GM23248 (cell line): ENCODE measurements at regions of chr2 and their contacts with region 1.

Region 1: DNA sequence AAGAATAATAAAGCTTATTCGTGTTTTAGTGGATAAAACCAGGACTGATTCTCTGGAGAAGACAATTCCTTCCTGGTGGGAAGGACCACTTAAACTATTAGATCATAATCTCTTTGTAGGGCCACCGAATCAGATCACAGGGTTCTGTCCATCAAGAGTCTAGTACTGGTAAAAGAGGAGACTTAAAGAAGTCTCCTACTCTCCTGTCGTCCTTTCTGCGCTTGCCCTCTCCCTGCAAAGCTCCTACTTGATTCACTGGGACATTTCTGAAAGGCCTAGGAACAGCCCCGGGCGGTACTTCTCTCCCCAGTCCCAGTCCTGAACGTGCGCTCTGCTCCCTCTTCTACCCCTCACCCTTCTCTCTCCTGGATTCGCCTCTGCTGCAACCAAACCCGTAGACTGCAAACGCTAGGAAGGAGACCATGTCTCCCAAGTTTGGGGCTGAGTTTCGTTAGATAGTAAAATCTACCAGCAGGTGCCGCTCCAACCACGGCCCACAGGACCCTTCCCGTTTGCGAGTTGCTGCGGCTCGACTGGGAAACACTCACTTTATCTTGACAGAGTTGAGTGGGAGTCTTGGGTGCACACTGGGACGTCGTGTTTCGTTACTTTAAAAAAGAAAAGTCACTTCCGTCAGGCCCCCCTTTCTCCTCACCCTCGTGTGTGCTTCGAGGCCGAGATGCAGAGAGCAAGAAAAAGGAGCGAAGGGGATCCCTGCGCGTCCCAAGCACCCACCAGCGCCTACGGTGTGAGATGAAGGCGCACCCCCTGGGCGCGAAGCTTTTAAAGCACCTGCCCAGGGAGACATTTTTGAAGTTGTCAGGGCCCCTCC is 923 bp downstream of the FIGLA start:
- DNase-seq: peak; percentile 68
- H3K4me3 ChIP-seq: peak overlapping the region; percentile 18; the same call in 1 of the 2 replicates
- H3K27ac ChIP-seq: no peak overlapping the region
- H3K4me1 ChIP-seq: no peaks in the 10 kb centered on the region
- H3K27me3 ChIP-seq: peaks cover 69% of the 10 kb centered on the region

Region 2: GRCh38 chr2:70301344-70302194 is 488.0 kb before region 1 on chr2 and contains the start of gene FAM136A:
- in situ Hi-C with region 1: loop called (anchors 25 kb)
- DNase-seq: peak; percentile 91
- H3K4me3 ChIP-seq: peak within 1 kb of the TSS; percentile 97
- H3K27ac ChIP-seq: peak within 1 kb of the TSS; percentile 15; the same call in 1 of the 2 replicates
- H3K4me1 ChIP-seq: peaks cover 4% of the 10 kb centered on the region; the same call in 1 of the 2 replicates
- H3K27me3 ChIP-seq: no peaks in the 10 kb centered on the region
- total RNA-seq, gene FAM136A: 40.3 and 44.2 TPM in 2 replicates

Region 3: GRCh38 chr2:70541481-70542020 is 248.0 kb before region 1 on chr2:
- in situ Hi-C with region 1: no loop called
- DNase-seq: peak; percentile 74
- H3K4me3 ChIP-seq: no peak overlapping the region
- H3K27ac ChIP-seq: no peak overlapping the region
- H3K4me1 ChIP-seq: peaks cover 17% of the 10 kb centered on the region
- H3K27me3 ChIP-seq: no peaks in the 10 kb centered on the region

Region 4: GRCh38 chr2:70656421-70657010 is 133.0 kb before region 1 on chr2:
- in situ Hi-C with region 1: loop called (anchors 10 kb)
- DNase-seq: no peak
- H3K4me3 ChIP-seq: no peak overlapping the region
- H3K27ac ChIP-seq: no peak overlapping the region
- H3K4me1 ChIP-seq: no peaks in the 10 kb centered on the region
- H3K27me3 ChIP-seq: peaks cover 65% of the 10 kb centered on the region

Region 5: DNA sequence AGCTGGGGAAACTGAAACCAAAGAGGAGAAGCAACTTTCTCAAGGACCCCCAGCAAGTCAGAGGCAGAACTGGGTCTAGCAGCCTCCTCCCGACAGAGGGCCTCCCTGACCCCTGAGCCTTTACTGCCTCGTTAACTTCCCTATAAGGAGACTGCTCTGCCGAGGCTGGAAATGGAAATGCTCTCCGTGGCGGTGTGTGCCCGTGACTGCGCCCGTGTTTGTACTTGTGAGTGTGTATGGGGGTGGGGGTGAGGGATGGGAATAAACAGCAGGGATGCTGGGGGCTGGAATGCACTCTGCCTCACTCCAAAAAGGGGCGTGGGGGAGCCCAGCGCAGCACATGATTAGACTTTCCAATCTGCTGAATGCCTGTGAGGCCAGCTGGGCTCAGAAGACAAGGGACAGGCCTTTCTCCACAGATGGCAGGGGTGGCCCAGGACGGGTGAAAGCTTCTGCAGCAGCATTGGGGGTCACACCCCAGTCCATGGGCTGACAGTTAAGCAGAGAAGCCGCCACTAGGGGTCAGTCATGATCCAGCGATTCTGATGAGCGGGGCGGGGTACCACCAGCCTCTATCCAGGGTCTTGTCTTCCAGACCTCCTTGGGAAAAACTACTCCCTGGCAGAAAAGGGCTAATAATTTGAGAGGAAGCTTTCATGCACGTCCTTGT is 367.7 kb after region 1 on chr2:
- in situ Hi-C with region 1: no loop called
- DNase-seq: peak; percentile 58
- H3K4me3 ChIP-seq: peak overlapping the region; percentile 28
- H3K27ac ChIP-seq: no peak overlapping the region
- H3K4me1 ChIP-seq: no peaks in the 10 kb centered on the region
- H3K27me3 ChIP-seq: no peaks in the 10 kb centered on the region